ENCODE measurements at regions of chr13 and their contacts with region 1.

Region 1: DNA sequence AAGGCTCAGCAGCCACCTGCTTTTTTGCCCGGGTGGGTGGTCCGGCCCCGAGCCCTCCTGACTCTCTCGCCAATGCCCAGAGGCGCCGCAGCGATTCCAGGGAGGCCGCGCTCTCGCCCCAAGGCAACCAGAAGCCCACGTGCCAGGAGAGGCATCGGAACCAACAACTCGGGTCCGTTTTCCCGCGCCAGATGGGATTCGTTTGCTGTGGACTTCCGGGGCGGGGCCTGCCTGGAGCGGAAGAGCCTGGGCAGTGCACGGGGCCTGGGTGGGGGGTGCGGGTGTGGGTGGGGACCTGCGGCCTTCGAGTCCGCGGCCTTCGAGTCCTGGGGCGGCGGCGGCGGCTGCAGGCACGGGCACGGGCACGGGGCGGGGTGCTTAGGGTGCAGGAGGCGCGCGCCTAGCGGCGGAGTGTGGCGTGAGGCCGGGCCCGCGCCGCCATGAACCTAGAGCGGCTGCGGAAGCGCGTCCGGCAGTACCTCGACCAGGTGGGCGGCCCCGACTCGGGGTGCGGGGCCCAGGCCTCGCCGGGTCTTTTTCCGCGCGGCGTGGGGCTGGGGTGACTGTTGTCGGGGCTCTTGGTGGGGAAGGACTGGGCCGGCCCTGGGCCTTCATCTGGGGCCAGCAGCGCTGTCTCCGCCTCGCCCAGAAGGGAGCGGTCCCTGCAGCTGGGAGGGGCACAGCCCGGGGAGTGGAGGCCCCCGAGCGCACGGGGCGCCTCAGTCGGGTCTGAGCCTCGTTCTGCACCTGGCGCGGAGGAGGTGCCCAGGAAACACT is at the start of gene CDC16:
- DNase-seq: peak; percentile 76
- H3K4me3 Mint-ChIP-seq: peak within 1 kb of the TSS; percentile 87
- H3K27ac Mint-ChIP-seq: peak within 1 kb of the TSS; percentile 78
- H3K4me1 Mint-ChIP-seq: peaks cover 35% of the 10 kb centered on the region
- H3K27me3 Mint-ChIP-seq: peaks cover 9% of the 10 kb centered on the region
- total RNA-seq, gene CDC16: 80.4 and 86.1 TPM in 2 replicates

Region 2: GRCh38 chr13:113816946-113817859 is 417.6 kb before region 1 on chr13:
- intact Hi-C with region 1: loop called (anchors 2 kb)
- DNase-seq: peak; percentile 80
- H3K4me3 Mint-ChIP-seq: peak overlapping the region; percentile 98
- H3K27ac Mint-ChIP-seq: peak overlapping the region; percentile 57
- H3K4me1 Mint-ChIP-seq: peaks cover 16% of the 10 kb centered on the region
- H3K27me3 Mint-ChIP-seq: no peaks in the 10 kb centered on the region

Region 3: GRCh38 chr13:114078461-114079451 is 156.1 kb before region 1 on chr13:
- intact Hi-C with region 1: no loop called
- DNase-seq: no peak
- H3K4me3 Mint-ChIP-seq: no peak overlapping the region
- H3K27ac Mint-ChIP-seq: no peak overlapping the region
- H3K4me1 Mint-ChIP-seq: no peaks in the 10 kb centered on the region
- H3K27me3 Mint-ChIP-seq: no peaks in the 10 kb centered on the region

Region 4: GRCh38 chr13:114132419-114133121 is 102.3 kb before region 1 on chr13 and contains the start of gene RASA3:
- intact Hi-C with region 1: loop called (anchors 5 kb)
- DNase-seq: peak; percentile 55
- H3K4me3 Mint-ChIP-seq: peak within 1 kb of the TSS; percentile 93
- H3K27ac Mint-ChIP-seq: peak within 1 kb of the TSS; percentile 87
- H3K4me1 Mint-ChIP-seq: peaks cover 34% of the 10 kb centered on the region
- H3K27me3 Mint-ChIP-seq: peaks cover 13% of the 10 kb centered on the region
- total RNA-seq, gene RASA3: 13.7 and 13.9 TPM in 2 replicates

Region 5: GRCh38 chr13:114281351-114282040 is 46.7 kb after region 1 on chr13 and contains the start of gene UPF3A:
- intact Hi-C with region 1: loop called (anchors 2 kb)
- DNase-seq: peak; percentile 84
- H3K4me3 Mint-ChIP-seq: peak within 1 kb of the TSS; percentile 85
- H3K27ac Mint-ChIP-seq: peak within 1 kb of the TSS; percentile 95
- H3K4me1 Mint-ChIP-seq: peaks cover 35% of the 10 kb centered on the region
- H3K27me3 Mint-ChIP-seq: no peaks in the 10 kb centered on the region
- total RNA-seq, gene UPF3A: 45.9 and 49.9 TPM in 2 replicates

Region 6: GRCh38 chr13:114314074-114314912 is 79.5 kb after region 1 on chr13 and contains the start of gene CHAMP1:
- intact Hi-C with region 1: loop called (anchors 1 kb)
- DNase-seq: peak; percentile 91
- H3K4me3 Mint-ChIP-seq: peak within 1 kb of the TSS; percentile 91
- H3K27ac Mint-ChIP-seq: peak within 1 kb of the TSS; percentile 98
- H3K4me1 Mint-ChIP-seq: peaks cover 38% of the 10 kb centered on the region
- H3K27me3 Mint-ChIP-seq: no peaks in the 10 kb centered on the region
- total RNA-seq, gene CHAMP1: 41.7 and 45.6 TPM in 2 replicates